Thyroid gland (tissue), 4 donors: ENCODE measurements at regions of chr1 and their contacts with region 1.

Region 1: GRCh38 chr1:218328769-218329168 is 16.4 kb upstream of the TGFB2 start:
- DNase-seq: no peak
- H3K4me3 ChIP-seq: no peak overlapping the region
- H3K27ac ChIP-seq: no peak overlapping the region
- H3K4me1 ChIP-seq: no peaks in the 10 kb centered on the region
- H3K27me3 ChIP-seq: no peaks in the 10 kb centered on the region
- CTCF ChIP-seq: no peak
- POLR2A ChIP-seq: no peak

Region 2: GRCh38 chr1:218200979-218201378 is 127.8 kb before region 1 on chr1:
- intact Hi-C with region 1: no loop called
- DNase-seq: no peak
- H3K4me3 ChIP-seq: no peak overlapping the region
- H3K27ac ChIP-seq: no peak overlapping the region
- H3K4me1 ChIP-seq: no peaks in the 10 kb centered on the region
- H3K27me3 ChIP-seq: no peaks in the 10 kb centered on the region
- CTCF ChIP-seq: no peak
- POLR2A ChIP-seq: no peak

Region 3: DNA sequence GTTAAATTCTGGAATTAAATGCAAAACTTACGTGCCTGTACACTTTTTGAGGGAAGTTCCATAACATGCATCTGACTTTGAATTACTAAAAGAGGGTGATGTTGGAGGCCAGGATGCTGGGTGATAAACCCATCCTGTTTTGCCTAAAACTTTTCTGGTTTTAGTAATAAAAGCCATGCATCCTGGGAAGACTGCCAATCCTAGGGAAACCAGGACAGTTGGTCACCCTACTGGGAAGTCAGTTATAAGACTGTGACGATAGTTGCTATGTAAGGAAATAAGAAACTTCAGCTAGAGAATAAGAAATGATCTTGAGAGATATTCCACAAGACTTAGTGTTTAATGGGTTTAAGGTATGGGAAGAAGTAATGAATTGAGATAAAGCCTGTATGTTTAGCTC is 508.3 kb after region 1 on chr1:
- intact Hi-C with region 1: no loop called
- DNase-seq: no peak
- H3K4me3 ChIP-seq: no peak overlapping the region
- H3K27ac ChIP-seq: no peak overlapping the region
- H3K4me1 ChIP-seq: no peaks in the 10 kb centered on the region
- H3K27me3 ChIP-seq: no peaks in the 10 kb centered on the region
- CTCF ChIP-seq: no peak
- POLR2A ChIP-seq: no peak

Region 4: DNA sequence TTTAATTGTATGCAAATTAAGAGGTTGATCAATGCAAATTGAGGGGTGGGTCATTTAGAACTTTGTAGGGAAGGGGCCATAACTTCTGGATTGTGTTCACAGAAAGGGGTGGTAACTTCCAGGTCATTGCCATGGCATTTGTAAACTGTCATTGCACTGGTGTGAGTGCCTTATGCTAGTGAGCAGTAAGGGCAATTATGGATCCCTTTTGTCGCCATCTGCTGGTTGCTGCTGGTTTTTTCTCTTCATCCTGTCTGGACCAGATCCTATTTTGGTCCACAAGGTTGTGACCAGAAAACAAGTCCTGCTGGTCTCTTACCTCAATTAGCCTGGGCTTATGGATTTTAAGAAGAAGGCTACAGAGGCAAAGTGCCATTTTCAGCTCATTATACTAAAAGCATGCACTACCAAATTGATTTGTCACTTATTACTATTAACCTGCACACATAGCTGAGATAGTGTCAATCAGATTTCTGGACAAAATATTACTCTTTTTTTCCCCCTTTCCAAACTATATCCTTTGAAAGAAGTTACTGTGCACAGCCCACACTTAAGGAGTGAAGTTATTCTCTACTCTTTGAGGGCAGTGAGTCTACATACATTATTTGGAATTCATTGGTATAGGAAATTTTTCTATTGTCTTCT is 1087.9 kb after region 1 on chr1:
- intact Hi-C with region 1: loop called (anchors 5 kb)
- DNase-seq: peak; percentile 58 to 67
- H3K4me3 ChIP-seq: no peak overlapping the region
- H3K27ac ChIP-seq: no peak overlapping the region
- H3K4me1 ChIP-seq: no peaks in the 10 kb centered on the region
- H3K27me3 ChIP-seq: no peaks in the 10 kb centered on the region
- CTCF ChIP-seq: peak in 5 of 6 experiments; percentile 22 to 77 (median 48)
- POLR2A ChIP-seq: no peak